GM10248 (cell line): ENCODE measurements at regions of chr22 and their contacts with region 1.

Region 1: DNA sequence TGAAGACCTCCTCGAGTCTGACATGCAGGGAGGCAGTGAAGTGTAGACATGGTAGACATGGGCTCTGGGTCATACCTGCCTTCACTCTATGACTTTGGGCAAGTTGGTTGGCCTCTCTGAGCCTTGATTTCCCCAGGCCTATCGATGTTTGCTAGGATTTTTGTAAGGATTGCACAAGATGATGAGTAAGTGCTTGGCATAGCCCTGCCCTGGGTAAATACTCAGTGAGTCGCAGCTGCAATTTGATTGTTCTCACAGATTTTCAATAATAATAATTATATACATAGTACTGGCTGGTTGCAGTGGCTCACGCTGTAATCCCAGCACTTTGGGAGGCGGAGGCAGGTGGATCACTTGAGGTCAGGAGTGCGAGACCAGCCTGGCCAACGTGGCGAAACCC is 18.1 kb downstream of the MCM5 start:
- DNase-seq: no peak
- CTCF ChIP-seq: no peak

Region 2: DNA sequence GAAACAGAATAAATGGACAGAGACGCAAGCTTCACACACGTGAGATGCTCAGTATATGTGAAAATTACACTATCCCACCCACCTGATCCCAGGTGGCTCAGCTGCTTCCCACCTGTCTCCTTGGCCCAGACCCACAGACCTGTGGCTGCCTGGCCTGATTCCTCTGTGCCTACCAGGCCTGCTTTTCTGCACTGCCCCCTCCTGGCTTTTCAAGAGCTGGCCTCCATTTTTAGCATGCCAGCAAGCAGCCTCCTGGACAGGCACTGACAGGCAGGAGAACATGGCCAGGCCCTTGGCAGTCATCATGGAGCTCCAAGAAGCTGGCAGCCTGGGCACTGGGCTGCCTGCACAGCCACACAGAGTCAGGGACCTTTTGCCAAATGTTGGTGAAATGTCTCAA is 240.3 kb before region 1 on chr22:
- CTCF ChIA-PET with region 1: no interaction called
- POLR2A ChIA-PET with region 1: no interaction called
- DNase-seq: no peak
- CTCF ChIP-seq: no peak

Region 3: GRCh38 chr22:35430897-35431322 is 12.8 kb after region 1 on chr22:
- CTCF ChIA-PET with region 1: interaction called, 19 read pairs
- POLR2A ChIA-PET with region 1: no interaction called
- DNase-seq: peak; percentile 73
- CTCF ChIP-seq: peak; percentile 44